Left cardiac atrium (tissue), 4 donors: ENCODE measurements at regions of chr9 and their contacts with region 1.

Region 1: DNA sequence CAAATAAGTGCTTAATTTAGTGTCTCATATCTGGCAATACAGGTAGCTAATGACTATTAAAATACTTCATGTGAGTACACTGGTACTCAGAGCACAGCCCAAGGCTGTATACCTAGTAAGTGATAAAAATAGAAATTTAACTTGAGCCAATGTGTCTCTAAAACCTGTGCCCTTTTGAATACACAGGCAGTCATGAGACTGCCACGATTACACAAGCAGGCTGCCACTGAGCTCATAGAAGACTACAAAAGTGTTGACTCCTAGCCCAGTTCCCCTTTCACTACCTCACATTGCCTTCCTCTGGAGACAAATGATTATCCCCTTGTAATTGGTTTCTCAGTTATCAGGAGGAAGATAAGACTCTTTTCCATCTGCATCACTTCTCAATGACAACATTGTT is 66.3 kb upstream of the PAPPA start:
- DNase-seq: peak; percentile 56
- ATAC-seq: peak; percentile 75 to 76

Region 2: DNA sequence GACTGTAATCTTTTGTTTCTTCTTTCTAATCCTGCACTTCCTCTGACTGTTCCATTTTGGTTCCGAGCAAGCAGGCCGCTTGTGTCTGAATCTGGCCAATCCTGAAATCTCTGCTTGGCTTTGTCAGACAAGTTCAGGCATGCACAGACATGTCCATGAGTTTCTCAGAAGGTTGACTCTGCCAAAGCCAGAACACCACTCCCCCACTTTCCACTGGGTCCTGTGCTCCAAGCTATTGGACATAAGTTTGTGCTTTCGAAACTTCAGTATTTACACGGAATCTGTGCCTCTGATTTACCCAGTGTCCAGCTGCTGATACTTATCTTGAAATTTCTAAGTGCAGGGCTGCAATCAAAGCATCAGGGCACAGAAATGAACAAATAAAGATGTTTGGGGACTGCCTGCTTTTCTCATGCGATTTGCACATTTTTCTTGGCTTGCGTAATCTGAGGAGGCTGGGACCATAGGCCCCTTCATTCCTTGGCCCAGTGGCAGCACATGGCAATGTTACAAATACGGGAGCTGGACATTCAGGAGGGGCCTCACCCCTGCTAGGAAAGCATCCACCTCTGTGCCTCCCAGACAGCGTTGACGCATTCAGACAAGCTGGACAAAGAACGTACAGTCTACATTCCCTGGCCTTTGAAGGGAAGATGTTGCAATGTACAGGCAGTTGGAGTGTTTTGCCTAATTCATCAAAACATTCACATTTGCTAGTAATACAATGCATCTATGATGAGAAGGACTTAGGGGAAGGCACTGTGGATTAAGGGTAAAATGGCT is 142.9 kb before region 1 on chr9:
- intact Hi-C with region 1: loop called in 1 of 2 experiments (anchors 10 kb)
- DNase-seq: peak; percentile 81
- ATAC-seq: peak; percentile 90 to 97